ENCODE measurements at regions of chrX and their contacts with region 1.

Region 1: GRCh38 chrX:19887911-19888879 is 795 bp upstream of the SH3KBP1 start:
- DNase-seq: peak; percentile 76
- H3K4me3 Mint-ChIP-seq: peak overlapping the region; percentile 77
- H3K27ac Mint-ChIP-seq: peak overlapping the region; percentile 91
- H3K4me1 Mint-ChIP-seq: peaks cover 22% of the 10 kb centered on the region
- H3K27me3 Mint-ChIP-seq: no peaks in the 10 kb centered on the region
- CTCF ChIP-seq: peak; percentile 36

Region 2: GRCh38 chrX:19544693-19545305 is 343.4 kb before region 1 on chrX:
- CTCF ChIA-PET with region 1: no interaction called
- intact Hi-C with region 1: loop called (anchors 1 kb)
- DNase-seq: peak; percentile 46
- H3K4me3 Mint-ChIP-seq: no peak overlapping the region
- H3K27ac Mint-ChIP-seq: peak overlapping the region; percentile 32
- H3K4me1 Mint-ChIP-seq: no peaks in the 10 kb centered on the region
- H3K27me3 Mint-ChIP-seq: no peaks in the 10 kb centered on the region
- CTCF ChIP-seq: peak; percentile 58

Region 3: DNA sequence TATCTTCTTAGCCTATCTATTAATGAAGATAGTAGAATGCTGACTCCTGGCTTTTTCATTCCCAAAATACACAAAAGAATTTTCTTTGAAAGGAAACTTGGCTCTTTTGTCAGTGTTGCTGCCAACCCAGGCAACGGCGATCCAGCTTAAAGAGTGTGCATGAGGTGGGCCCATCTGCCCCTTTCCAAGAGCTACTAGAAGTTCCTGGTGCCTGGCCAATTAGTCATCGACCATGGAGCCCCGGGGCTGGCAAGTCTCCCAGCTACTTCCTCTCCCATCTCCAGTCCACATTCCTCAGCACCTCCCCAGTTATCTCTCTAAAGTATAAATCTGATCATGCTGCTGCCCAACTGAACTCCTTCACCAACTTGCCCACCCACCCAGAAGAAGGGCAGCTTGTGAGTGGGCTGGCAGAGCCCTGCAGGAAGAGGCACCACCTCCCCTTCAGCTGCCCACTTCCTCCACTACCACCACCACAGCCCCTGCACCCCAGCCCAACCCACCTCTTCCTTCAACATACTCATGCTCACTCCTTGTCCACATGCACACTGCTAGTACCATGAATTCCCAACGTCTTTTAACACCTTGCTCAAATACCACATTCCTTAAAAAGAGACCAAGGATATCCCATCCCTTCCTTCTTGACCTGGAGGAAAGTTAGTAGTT is 214.7 kb before region 1 on chrX:
- CTCF ChIA-PET with region 1: interaction called, 6 read pairs
- intact Hi-C with region 1: loop called (anchors 5 kb)
- DNase-seq: peak; percentile 85
- H3K4me3 Mint-ChIP-seq: peak overlapping the region; percentile 32
- H3K27ac Mint-ChIP-seq: peak overlapping the region; percentile 85
- H3K4me1 Mint-ChIP-seq: peaks cover 49% of the 10 kb centered on the region
- H3K27me3 Mint-ChIP-seq: no peaks in the 10 kb centered on the region
- CTCF ChIP-seq: no peak

Region 4: GRCh38 chrX:19758539-19758938 is 129.7 kb before region 1 on chrX:
- CTCF ChIA-PET with region 1: no interaction called
- intact Hi-C with region 1: loop called (anchors 5 kb)
- DNase-seq: no peak
- H3K4me3 Mint-ChIP-seq: peak overlapping the region; percentile 9
- H3K27ac Mint-ChIP-seq: peak overlapping the region; percentile 71
- H3K4me1 Mint-ChIP-seq: peaks cover 56% of the 10 kb centered on the region
- H3K27me3 Mint-ChIP-seq: no peaks in the 10 kb centered on the region
- CTCF ChIP-seq: no peak